ENCODE measurements at regions of chr2 and their contacts with region 1.

Region 1: GRCh38 chr2:148402786-148403185 is 241.8 kb upstream of the EPC2 start:
- DNase-seq: no peak
- ATAC-seq: no peak
- H3K4me3 ChIP-seq: no peak overlapping the region
- H3K4me3 Mint-ChIP-seq: no peak overlapping the region
- H3K27ac ChIP-seq: no peak overlapping the region
- H3K27ac Mint-ChIP-seq: no peak overlapping the region
- H3K4me1 ChIP-seq: no peaks in the 10 kb centered on the region
- H3K4me1 Mint-ChIP-seq: peaks cover 0 to 21% (median 7%) of the 10 kb centered on the region in 7 donors
- H3K27me3 ChIP-seq: no peaks in the 10 kb centered on the region
- H3K27me3 Mint-ChIP-seq: no peaks in the 10 kb centered on the region

Region 2: GRCh38 chr2:148375214-148375613 is 27.6 kb before region 1 on chr2:
- CTCF ChIA-PET with region 1: no interaction called
- POLR2A ChIA-PET with region 1: no interaction called
- intact Hi-C with region 1: loop called in 1 of 2 experiments (anchors 2 kb)
- DNase-seq: no peak
- ATAC-seq: no peak
- H3K4me3 ChIP-seq: no peak overlapping the region
- H3K4me3 Mint-ChIP-seq: no peak overlapping the region
- H3K27ac ChIP-seq: no peak overlapping the region
- H3K27ac Mint-ChIP-seq: no peak overlapping the region
- H3K4me1 ChIP-seq: no peaks in the 10 kb centered on the region
- H3K4me1 Mint-ChIP-seq: no peaks in the 10 kb centered on the region
- H3K27me3 ChIP-seq: no peaks in the 10 kb centered on the region
- H3K27me3 Mint-ChIP-seq: no peaks in the 10 kb centered on the region

Measured in naive thymus-derived CD4-positive, alpha-beta T cell (primary cell).